Lower lobe of right lung (tissue), 2 donors: ENCODE measurements at regions of chr17 and their contacts with region 1.

Region 1: GRCh38 chr17:2172077-2172851 is 117.4 kb downstream of the HIC1 start:
- DNase-seq: peak; percentile 69
- ATAC-seq: peak; percentile 89 to 91
- H3K4me3 ChIP-seq: no peak overlapping the region
- H3K27ac ChIP-seq: peak overlapping the region; percentile 74
- H3K4me1 ChIP-seq: peaks cover 56% of the 10 kb centered on the region
- H3K27me3 ChIP-seq: no peaks in the 10 kb centered on the region
- CTCF ChIP-seq: no peak

Region 2: DNA sequence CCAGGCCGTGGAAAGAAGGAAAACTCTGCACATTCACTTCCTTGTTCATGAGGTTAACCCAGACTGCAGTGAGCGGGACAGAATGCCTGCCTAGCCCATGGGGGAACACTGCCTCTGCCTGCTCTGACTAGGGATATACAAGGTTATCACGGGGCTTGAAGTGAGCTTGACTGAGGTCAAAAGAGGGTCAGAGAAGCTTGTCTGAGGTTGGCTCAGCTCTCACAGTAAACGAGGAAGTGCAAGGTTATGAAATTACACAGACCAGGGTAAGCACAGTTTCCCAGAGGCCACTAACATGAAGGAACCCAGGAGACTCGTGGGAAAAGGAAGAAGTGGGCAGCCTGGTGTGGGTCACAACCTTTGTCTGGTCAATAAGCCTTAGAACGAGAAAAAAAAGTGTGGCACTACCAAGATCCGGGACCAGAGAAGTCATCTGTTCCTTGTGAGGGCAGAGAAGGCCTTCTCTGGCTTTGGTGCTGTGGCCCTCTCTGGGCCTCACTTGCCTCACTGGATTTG is 88.6 kb before region 1 on chr17:
- intact Hi-C with region 1: no loop called
- DNase-seq: peak; percentile 68
- ATAC-seq: peak; percentile 79 to 81
- H3K4me3 ChIP-seq: no peak overlapping the region
- H3K27ac ChIP-seq: peak overlapping the region; percentile 81
- H3K4me1 ChIP-seq: peaks cover 67% of the 10 kb centered on the region
- H3K27me3 ChIP-seq: no peaks in the 10 kb centered on the region
- CTCF ChIP-seq: no peak

Region 3: DNA sequence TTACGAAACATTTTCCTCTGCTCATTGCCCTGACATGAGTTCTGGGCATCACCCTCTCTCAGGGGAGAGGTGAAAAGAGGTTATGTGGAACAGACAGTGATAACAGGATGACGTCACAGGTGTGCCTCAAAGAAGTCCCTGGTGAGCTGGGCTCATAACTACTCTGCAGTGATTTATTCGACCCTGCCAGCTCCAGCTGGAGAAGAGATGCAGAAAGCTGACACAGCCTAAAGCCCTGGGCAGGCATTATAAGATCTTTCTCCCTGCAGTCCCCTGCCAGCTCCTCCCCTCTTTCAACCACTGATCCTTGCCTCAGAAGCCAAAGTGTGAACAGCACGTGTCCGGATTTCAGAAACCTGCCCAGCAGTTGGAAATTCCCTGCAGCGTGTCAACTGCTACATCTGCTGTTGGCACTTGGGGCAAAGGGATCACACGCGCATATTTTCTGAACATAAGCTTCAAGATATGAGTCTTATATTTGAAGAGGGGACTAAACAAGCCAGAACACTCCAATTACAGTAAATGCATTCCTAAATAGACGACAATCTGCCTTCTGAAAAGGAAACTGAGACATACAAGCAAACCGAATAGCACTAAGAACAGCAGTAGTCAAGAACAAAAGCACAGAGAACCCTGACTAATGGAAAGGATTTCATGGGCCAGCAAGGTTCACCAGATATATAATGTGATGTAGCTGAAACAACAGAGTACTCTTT is 50.8 kb after region 1 on chr17:
- intact Hi-C with region 1: loop called (anchors 10 kb)
- DNase-seq: no peak
- ATAC-seq: peak; percentile 72 to 82
- H3K4me3 ChIP-seq: no peak overlapping the region
- H3K27ac ChIP-seq: peak overlapping the region; percentile 46
- H3K4me1 ChIP-seq: peaks cover 16% of the 10 kb centered on the region
- H3K27me3 ChIP-seq: no peaks in the 10 kb centered on the region
- CTCF ChIP-seq: no peak

Region 4: DNA sequence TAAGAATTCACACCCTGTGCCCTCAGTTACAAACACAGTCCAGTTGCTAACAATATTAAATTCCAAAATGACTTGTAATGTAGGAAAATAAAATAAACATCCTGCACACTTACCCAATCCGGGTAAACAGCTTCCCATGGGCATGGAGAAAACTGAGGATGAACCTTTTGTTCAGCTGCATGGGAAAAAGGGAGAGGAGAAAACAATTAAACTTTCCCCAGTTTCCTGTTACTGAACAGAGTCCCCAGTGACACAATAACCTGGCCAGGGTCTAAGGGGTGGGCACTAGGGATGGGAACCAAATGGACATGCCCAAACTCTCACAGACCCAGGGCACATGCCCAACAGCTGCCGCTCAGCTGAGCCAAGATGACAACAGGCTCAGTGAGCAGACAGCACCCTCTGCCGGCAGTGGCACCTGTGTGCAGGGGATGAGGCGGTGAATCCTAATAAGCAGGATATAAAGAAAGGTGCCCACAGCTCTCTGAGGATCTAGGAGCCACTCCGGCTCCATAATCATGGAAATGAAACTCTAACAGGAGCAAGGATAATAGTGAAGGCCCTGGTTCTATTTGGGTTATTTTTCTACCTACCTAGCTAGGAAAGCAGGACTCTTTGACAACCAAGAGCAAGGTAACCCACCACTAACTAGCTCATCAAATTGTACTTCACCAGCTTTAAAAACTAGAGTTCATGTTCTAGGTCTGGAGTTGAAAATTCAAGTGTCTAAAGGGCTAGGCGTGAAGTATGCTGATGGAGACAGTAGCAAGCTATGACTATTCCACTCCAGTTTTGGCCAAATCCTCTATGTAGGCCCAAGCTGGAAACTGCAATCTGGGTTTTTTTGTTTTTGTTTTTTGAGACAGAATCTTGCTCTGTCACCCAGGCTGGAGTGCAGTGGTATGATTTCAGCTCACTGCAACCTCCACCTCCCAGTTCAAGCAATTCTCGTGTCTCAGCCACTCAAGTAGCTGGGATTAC is 72.6 kb after region 1 on chr17:
- intact Hi-C with region 1: no loop called
- DNase-seq: peak; percentile 87
- ATAC-seq: peak; percentile 95 to 96
- H3K4me3 ChIP-seq: no peak overlapping the region
- H3K27ac ChIP-seq: peak overlapping the region; percentile 76
- H3K4me1 ChIP-seq: peaks cover 18% of the 10 kb centered on the region
- H3K27me3 ChIP-seq: no peaks in the 10 kb centered on the region
- CTCF ChIP-seq: peak; percentile 98